CD14-positive monocyte (primary cell): ENCODE measurements at regions of chr2 and their contacts with region 1.

Region 1: DNA sequence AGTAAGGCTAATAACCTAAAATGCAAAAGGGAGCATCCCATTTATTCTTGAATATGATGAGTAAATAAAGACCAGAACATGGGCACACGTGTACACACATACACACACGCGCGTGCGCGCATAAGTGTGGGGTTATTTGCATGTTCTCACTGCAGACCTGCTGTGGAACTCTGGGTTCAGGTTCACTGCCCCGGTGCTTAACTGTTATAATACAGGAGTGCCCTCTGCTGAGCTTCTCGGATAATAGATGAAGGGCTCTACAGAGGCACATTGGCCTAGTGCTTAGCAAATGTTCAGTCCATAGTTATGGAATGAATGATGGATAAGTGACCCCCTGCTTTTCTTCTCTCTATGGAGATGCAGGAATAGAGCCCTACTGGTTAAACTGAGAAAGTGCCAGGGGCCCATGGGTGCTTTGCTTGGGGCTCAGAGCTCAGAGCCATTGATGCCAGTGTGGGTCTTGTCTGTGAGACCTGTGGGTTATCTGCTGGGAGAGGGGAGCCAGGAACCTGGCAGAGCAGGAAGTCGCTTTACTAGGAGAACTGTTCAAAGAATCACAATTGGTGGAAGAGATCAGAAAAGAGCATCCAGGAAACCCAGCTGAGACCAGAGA is 3.6 kb upstream of the ARL4C start:
- DNase-seq: peak; percentile 43 to 67 (median 67)
- H3K4me3 ChIP-seq: no peak overlapping the region
- H3K4me3 Mint-ChIP-seq: peak overlapping the region in 1 of 2 donors; percentile 24
- H3K27ac ChIP-seq: no peak overlapping the region
- H3K27ac Mint-ChIP-seq: peak overlapping the region in 1 of 7 donors; percentile 83
- H3K4me1 ChIP-seq: peaks cover 9% of the 10 kb centered on the region in 2 donors
- H3K4me1 Mint-ChIP-seq: peaks cover 8% of the 10 kb centered on the region
- H3K27me3 ChIP-seq: peaks cover 8 to 11% of the 10 kb centered on the region in 2 donors
- H3K27me3 Mint-ChIP-seq: peaks cover 21 to 36% (median 33%) of the 10 kb centered on the region in 3 donors
- CTCF ChIP-seq: peak; percentile 57

Region 2: DNA sequence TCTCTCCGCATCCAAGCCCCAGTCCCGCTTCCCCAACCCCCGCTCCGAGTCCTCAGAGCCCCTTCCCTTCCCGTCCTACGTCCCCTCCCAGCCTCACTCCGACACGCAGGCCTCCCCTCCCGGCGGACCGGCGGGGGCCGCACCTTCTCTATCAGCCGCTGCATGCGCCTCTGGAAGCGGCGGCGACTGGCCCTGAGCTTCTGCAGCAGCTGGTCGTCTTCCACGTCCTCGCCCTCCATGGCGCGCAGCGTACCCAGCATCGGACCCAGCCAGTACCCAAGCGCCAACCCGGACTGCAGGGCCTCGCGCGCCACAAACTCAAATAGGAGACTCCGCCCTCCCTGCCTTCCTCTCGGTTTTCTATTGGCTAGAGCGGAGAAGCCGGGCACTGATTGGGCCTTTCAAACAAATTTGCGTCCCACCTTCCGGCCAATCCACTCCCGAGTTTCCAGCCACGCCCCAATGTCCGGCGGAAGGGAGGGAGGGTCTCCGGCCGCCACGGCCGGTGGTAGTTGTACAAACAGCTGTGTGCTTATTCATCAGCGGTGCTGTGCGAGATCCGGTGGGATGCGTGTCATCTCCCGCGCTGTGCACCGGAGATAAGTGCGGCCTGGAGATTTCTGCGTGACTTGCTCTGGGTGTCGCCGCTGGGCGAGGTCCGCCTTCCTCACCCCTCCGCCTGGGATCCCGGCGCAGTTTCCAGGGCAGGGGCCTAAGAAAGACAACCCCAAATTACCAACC is 646.1 kb before region 1 on chr2 and contains the start of gene HJURP:
- intact Hi-C with region 1: loop called (anchors 10 kb)
- DNase-seq: peak; percentile 89 to 94 (median 91)
- H3K4me3 ChIP-seq: peak within 1 kb of the TSS; percentile 51 to 95 (median 61)
- H3K4me3 Mint-ChIP-seq: peak within 1 kb of the TSS; percentile 95 to 98
- H3K27ac ChIP-seq: peak within 1 kb of the TSS in 1 of 2 donors; percentile 67
- H3K27ac Mint-ChIP-seq: peak within 1 kb of the TSS; percentile 76 to 91 (median 82)
- H3K4me1 ChIP-seq: peaks cover 29 to 34% of the 10 kb centered on the region in 2 donors
- H3K4me1 Mint-ChIP-seq: peaks cover 40% of the 10 kb centered on the region
- H3K27me3 ChIP-seq: no peaks in the 10 kb centered on the region
- H3K27me3 Mint-ChIP-seq: peaks cover 0 to 4% (median 2%) of the 10 kb centered on the region in 3 donors
- CTCF ChIP-seq: no peak
- polyA plus RNA-seq, gene HJURP: not detected

Region 3: GRCh38 chr2:234146087-234146826 is 354.2 kb before region 1 on chr2:
- intact Hi-C with region 1: loop called in 1 of 2 experiments (anchors 10 kb)
- DNase-seq: no peak
- H3K4me3 ChIP-seq: no peak overlapping the region
- H3K4me3 Mint-ChIP-seq: no peak overlapping the region
- H3K27ac ChIP-seq: no peak overlapping the region
- H3K27ac Mint-ChIP-seq: no peak overlapping the region
- H3K4me1 ChIP-seq: no peaks in the 10 kb centered on the region
- H3K4me1 Mint-ChIP-seq: no peaks in the 10 kb centered on the region
- H3K27me3 ChIP-seq: peaks cover 1 to 2% of the 10 kb centered on the region in 2 donors
- H3K27me3 Mint-ChIP-seq: peaks cover 2 to 17% (median 15%) of the 10 kb centered on the region in 3 donors
- CTCF ChIP-seq: no peak

Region 4: DNA sequence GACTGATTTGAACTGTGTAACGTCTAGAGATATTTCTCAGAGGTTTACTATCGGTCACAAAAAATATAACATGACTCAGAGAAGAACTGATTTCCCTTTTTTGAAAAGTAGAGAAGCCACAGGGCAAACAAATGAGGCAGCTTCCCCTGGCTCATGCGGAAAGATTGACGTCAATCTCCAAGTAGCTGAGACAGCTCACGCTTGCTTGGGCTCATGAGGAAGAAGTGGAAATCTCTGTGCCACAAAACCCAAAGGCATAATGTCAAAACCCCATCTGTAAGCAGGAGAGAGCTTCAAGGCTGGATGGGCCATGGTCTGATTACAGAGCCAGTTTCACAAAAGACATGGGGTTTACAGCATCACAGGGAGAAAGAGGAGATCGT is 191.7 kb before region 1 on chr2:
- intact Hi-C with region 1: loop called in 1 of 2 experiments (anchors 5 kb)
- DNase-seq: peak; percentile 93 to 96 (median 95)
- H3K4me3 ChIP-seq: no peak overlapping the region
- H3K4me3 Mint-ChIP-seq: peak overlapping the region in 1 of 2 donors; percentile 47
- H3K27ac ChIP-seq: peak overlapping the region; percentile 80 to 94
- H3K27ac Mint-ChIP-seq: peak overlapping the region; percentile 89 to 98 (median 96)
- H3K4me1 ChIP-seq: peaks cover 21 to 26% of the 10 kb centered on the region in 2 donors
- H3K4me1 Mint-ChIP-seq: peaks cover 35% of the 10 kb centered on the region
- H3K27me3 ChIP-seq: peaks cover 3 to 4% of the 10 kb centered on the region in 2 donors
- H3K27me3 Mint-ChIP-seq: peaks cover 2 to 16% (median 10%) of the 10 kb centered on the region in 3 donors
- CTCF ChIP-seq: no peak

Region 5: DNA sequence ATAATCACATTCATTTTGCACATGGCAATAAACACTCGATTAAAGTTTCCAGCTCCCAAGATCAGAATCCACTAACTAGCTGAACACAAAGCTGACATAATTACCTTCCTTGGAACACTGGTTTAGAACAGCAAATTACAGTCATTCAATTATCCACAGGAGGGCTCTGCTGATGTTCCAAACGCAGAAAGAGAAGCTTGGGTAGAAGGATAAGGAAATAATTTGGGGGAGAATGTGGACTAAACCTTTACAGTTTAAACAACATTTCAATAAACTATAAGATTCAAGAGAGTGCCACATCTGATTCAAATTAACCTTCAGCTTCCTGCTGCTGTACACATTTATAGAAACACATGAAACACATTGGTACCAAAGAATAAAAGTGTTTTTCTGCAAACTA is 64.2 kb after region 1 on chr2:
- intact Hi-C with region 1: no loop called
- DNase-seq: no peak
- H3K4me3 ChIP-seq: no peak overlapping the region
- H3K4me3 Mint-ChIP-seq: no peak overlapping the region
- H3K27ac ChIP-seq: no peak overlapping the region
- H3K27ac Mint-ChIP-seq: no peak overlapping the region
- H3K4me1 ChIP-seq: no peaks in the 10 kb centered on the region
- H3K4me1 Mint-ChIP-seq: peaks cover under 1% of the 10 kb centered on the region
- H3K27me3 ChIP-seq: no peaks in the 10 kb centered on the region
- H3K27me3 Mint-ChIP-seq: peaks cover 0 to 2% (median 2%) of the 10 kb centered on the region in 3 donors
- CTCF ChIP-seq: no peak